Common myeloid progenitor, CD34-positive (primary cell): ENCODE measurements at regions of chr13 and their contacts with region 1.

Region 1: DNA sequence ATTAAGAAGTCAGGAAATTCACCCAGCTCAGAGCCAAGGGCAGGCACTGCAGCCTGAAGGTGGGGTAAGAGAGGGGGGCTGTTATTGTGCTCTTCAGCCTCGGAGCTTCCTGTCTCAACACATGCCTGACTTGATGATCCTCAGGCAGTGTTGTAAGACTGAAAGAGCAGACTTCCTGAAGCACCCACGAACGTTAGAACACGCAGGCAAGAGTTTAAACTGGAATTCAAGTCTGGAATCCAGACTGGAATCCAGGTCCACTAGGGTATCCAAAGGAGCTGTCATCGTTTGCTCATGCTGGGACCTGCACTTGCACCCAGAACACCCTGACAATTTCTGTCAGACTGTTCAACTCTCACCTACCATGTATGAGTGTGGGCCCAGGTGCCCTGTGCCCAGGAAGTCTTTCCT is 10.7 kb upstream of the FLT1 start:
- DNase-seq: peak in 2 of 3 donors; percentile 70 to 77
- H3K4me3 ChIP-seq: peak overlapping the region in 2 of 7 experiments; percentile 25 to 37
- H3K27ac ChIP-seq: no peak overlapping the region
- H3K4me1 ChIP-seq: peaks cover 8 to 24% (median 13%) of the 10 kb centered on the region in 4 experiments
- H3K27me3 ChIP-seq: no peaks in the 10 kb centered on the region

Region 2: GRCh38 chr13:28394422-28394821 is 111.2 kb before region 1 on chr13:
- CTCF ChIA-PET with region 1: no interaction called
- POLR2A ChIA-PET with region 1: no interaction called
- DNase-seq: peak in 2 of 3 donors; percentile 60 to 65
- H3K4me3 ChIP-seq: no peak overlapping the region
- H3K27ac ChIP-seq: no peak overlapping the region
- H3K4me1 ChIP-seq: peaks cover 0 to 6% (median 2%) of the 10 kb centered on the region in 4 experiments
- H3K27me3 ChIP-seq: no peaks in the 10 kb centered on the region

Region 3: DNA sequence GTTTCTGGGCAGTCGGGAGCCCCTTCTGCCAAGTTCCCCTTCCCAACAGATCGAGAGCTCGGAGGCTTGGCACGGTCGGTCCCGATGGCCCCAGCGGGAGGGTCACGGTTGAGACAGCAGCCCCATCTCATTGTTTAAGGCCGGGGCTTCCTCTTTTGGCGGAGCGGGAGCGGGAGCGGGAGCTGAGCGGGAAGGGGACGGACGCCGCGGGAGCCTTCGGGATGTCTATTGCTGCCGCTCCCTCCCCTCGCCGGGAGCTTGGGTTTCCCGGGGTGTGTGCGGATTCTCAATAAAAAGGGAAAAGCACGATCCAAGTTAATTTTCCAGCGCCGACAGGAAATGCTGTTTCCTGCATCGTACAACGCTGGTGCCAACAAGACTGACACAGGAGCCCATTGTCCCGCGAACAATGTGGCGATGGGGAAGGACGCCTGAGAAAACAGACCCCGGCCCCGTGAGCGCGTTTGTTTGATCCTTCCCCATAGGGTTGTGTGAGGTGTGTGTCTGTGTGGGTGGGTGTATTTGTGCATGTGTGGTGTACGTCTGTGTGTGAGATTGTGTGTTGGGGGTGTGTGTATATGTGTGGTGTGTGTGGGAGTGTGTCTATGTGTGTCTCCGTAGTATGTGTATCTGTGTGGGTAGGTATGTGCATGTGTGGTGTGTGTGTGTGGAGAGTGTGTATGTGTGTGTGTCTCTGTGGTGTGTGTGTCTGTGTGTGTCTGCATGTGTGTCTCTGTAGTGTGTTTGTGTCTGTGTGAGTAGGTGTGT is 25.6 kb after region 1 on chr13:
- CTCF ChIA-PET with region 1: interaction called, 16 read pairs
- POLR2A ChIA-PET with region 1: no interaction called
- DNase-seq: peak in 2 of 3 donors; percentile 49 to 67
- H3K4me3 ChIP-seq: peak overlapping the region in 6 of 7 experiments; percentile 2 to 71 (median 52)
- H3K27ac ChIP-seq: no peak overlapping the region
- H3K4me1 ChIP-seq: peaks cover 11 to 53% (median 42%) of the 10 kb centered on the region in 4 experiments
- H3K27me3 ChIP-seq: peaks cover 0 to 41% (median 11%) of the 10 kb centered on the region in 5 experiments